HAP-1 (cell line): ENCODE measurements at regions of chr11 and their contacts with region 1.

Region 1: GRCh38 chr11:8040261-8040920 is 40.6 kb upstream of the TUB start:
- DNase-seq: no peak
- H3K4me3 ChIP-seq: no peak overlapping the region
- H3K4me1 ChIP-seq: no peaks in the 10 kb centered on the region
- H3K27me3 ChIP-seq: peaks cover 18% of the 10 kb centered on the region

Region 2: GRCh38 chr11:7513234-7514098 is 526.9 kb before region 1 on chr11 and contains the start of gene PPFIBP2:
- in situ Hi-C with region 1: no loop called
- DNase-seq: peak; percentile 64 to 89
- H3K4me3 ChIP-seq: peak within 1 kb of the TSS; percentile 90
- H3K4me1 ChIP-seq: peaks cover 27% of the 10 kb centered on the region
- H3K27me3 ChIP-seq: no peaks in the 10 kb centered on the region

Region 3: GRCh38 chr11:8087185-8087584 is 46.8 kb after region 1 on chr11:
- in situ Hi-C with region 1: loop called (anchors 5 kb)
- DNase-seq: no peak
- H3K4me3 ChIP-seq: no peak overlapping the region
- H3K4me1 ChIP-seq: peaks cover 16% of the 10 kb centered on the region
- H3K27me3 ChIP-seq: no peaks in the 10 kb centered on the region

Region 4: GRCh38 chr11:8138526-8138925 is 98.1 kb after region 1 on chr11:
- in situ Hi-C with region 1: no loop called
- DNase-seq: no peak
- H3K4me3 ChIP-seq: no peak overlapping the region
- H3K4me1 ChIP-seq: no peaks in the 10 kb centered on the region
- H3K27me3 ChIP-seq: no peaks in the 10 kb centered on the region

Region 5: GRCh38 chr11:8523396-8523795 is 483.0 kb after region 1 on chr11:
- in situ Hi-C with region 1: no loop called
- DNase-seq: no peak
- H3K4me3 ChIP-seq: no peak overlapping the region
- H3K4me1 ChIP-seq: peaks cover 4% of the 10 kb centered on the region
- H3K27me3 ChIP-seq: no peaks in the 10 kb centered on the region